Activated CD4-positive, alpha-beta T cell treated with anti-CD3 and anti-CD28 coated beads for 36 hours (primary cell): ENCODE measurements at regions of chr17 and their contacts with region 1.

Region 1: GRCh38 chr17:542943-543342 is 171.7 kb downstream of the VPS53 start:
- DNase-seq: no peak
- ATAC-seq: peak; percentile 89
- H3K4me3 Mint-ChIP-seq: no peak overlapping the region
- H3K27ac Mint-ChIP-seq: peak overlapping the region; percentile 64
- H3K4me1 Mint-ChIP-seq: peaks cover 14% of the 10 kb centered on the region
- H3K27me3 Mint-ChIP-seq: no peaks in the 10 kb centered on the region

Region 2: GRCh38 chr17:559551-560431 is 16.8 kb after region 1 on chr17:
- CTCF ChIA-PET with region 1: no interaction called
- POLR2A ChIA-PET with region 1: interaction called, 12 read pairs
- intact Hi-C with region 1: no loop called
- DNase-seq: no peak
- ATAC-seq: peak; percentile 61
- H3K4me3 Mint-ChIP-seq: no peak overlapping the region
- H3K27ac Mint-ChIP-seq: no peak overlapping the region
- H3K4me1 Mint-ChIP-seq: peaks cover 16% of the 10 kb centered on the region
- H3K27me3 Mint-ChIP-seq: no peaks in the 10 kb centered on the region

Region 3: GRCh38 chr17:601244-601925 is 58.4 kb after region 1 on chr17:
- CTCF ChIA-PET with region 1: no interaction called
- POLR2A ChIA-PET with region 1: no interaction called
- intact Hi-C with region 1: no loop called
- DNase-seq: no peak
- ATAC-seq: no peak
- H3K4me3 Mint-ChIP-seq: no peak overlapping the region
- H3K27ac Mint-ChIP-seq: no peak overlapping the region
- H3K4me1 Mint-ChIP-seq: peaks cover 2% of the 10 kb centered on the region
- H3K27me3 Mint-ChIP-seq: no peaks in the 10 kb centered on the region

Region 4: DNA sequence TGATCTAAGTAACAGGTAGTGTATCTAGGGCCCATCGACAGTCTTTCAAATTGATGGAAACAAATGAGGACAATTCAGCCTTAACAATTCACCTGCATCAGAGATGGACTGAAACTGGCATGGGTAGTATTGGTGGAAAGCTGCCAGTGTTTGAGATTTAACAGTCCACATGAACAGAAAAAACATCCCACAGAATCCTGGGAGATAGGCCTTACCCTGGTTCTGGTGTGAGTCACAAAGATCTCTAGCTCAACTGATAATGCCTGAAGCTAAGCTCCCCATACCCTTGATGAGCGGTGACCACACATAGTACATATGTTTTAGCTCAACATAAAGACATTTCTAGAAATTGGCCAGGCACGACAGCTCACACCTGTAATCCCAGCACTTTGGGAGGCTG is 891.2 kb after region 1 on chr17:
- CTCF ChIA-PET with region 1: no interaction called
- POLR2A ChIA-PET with region 1: interaction called, 13 read pairs
- intact Hi-C with region 1: no loop called
- DNase-seq: no peak
- ATAC-seq: no peak
- H3K4me3 Mint-ChIP-seq: no peak overlapping the region
- H3K27ac Mint-ChIP-seq: no peak overlapping the region
- H3K4me1 Mint-ChIP-seq: peaks cover 26% of the 10 kb centered on the region
- H3K27me3 Mint-ChIP-seq: no peaks in the 10 kb centered on the region